Dendritic cell treated with granulocyte-macrophage colony-stimulating factor and Interleukin-4, amounts not matched to agents 40 ng/mL and 50 ng/mL, for 4 days (primary cell): ENCODE measurements at regions of chrX and their contacts with region 1.

Region 1: GRCh38 chrX:38654302-38654701 is 93.0 kb downstream of the TSPAN7 start:
- H3K4me3 Mint-ChIP-seq: no peak overlapping the region
- H3K27ac Mint-ChIP-seq: no peak overlapping the region
- H3K4me1 Mint-ChIP-seq: peaks cover 6% of the 10 kb centered on the region
- H3K27me3 Mint-ChIP-seq: no peaks in the 10 kb centered on the region

Region 2: GRCh38 chrX:38335382-38335781 is 318.9 kb before region 1 on chrX:
- intact Hi-C with region 1: loop called (anchors 5 kb)
- H3K4me3 Mint-ChIP-seq: no peak overlapping the region
- H3K27ac Mint-ChIP-seq: no peak overlapping the region
- H3K4me1 Mint-ChIP-seq: peaks cover 13% of the 10 kb centered on the region
- H3K27me3 Mint-ChIP-seq: no peaks in the 10 kb centered on the region

Region 3: DNA sequence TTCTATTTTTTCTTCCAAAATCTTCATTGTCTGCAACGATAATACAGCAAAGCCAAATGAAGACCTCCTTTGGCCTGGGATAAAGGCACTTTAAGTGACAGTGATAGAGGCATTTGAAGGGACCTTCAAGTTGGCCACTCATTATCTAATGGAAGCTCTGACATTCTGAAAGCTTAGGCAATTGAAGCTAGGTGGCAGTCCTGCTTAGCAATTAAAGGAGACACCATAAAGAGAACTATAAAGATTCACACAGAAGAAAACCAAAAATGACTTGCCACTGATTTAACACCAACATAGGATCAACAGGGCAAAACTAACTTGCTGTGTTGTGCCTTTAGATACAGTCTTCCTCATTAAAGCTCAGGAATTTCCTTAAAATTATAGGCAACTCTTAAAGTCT is 196.2 kb before region 1 on chrX:
- intact Hi-C with region 1: loop called (anchors 10 kb)
- H3K4me3 Mint-ChIP-seq: no peak overlapping the region
- H3K27ac Mint-ChIP-seq: no peak overlapping the region
- H3K4me1 Mint-ChIP-seq: no peaks in the 10 kb centered on the region
- H3K27me3 Mint-ChIP-seq: no peaks in the 10 kb centered on the region

Region 4: GRCh38 chrX:38868941-38869401 is 214.7 kb after region 1 on chrX:
- intact Hi-C with region 1: no loop called
- H3K4me3 Mint-ChIP-seq: no peak overlapping the region
- H3K27ac Mint-ChIP-seq: peak overlapping the region; percentile 86
- H3K4me1 Mint-ChIP-seq: peaks cover 31% of the 10 kb centered on the region
- H3K27me3 Mint-ChIP-seq: no peaks in the 10 kb centered on the region